ENCODE measurements at regions of chr10 and their contacts with region 1.

Region 1: GRCh38 chr10:17910125-17910789 is 41.5 kb upstream of the SLC39A12 start:
- DNase-seq: peak; percentile 50 to 63
- H3K4me3 ChIP-seq: no peak overlapping the region
- H3K27ac ChIP-seq: no peak overlapping the region
- H3K4me1 ChIP-seq: no peaks in the 10 kb centered on the region
- H3K27me3 ChIP-seq: no peaks in the 10 kb centered on the region
- CTCF ChIP-seq: peak in 4 of 6 experiments; percentile 41 to 61 (median 58)
- POLR2A ChIP-seq: no peak

Region 2: GRCh38 chr10:17836942-17837341 is 73.3 kb before region 1 on chr10:
- intact Hi-C with region 1: no loop called
- DNase-seq: peak; percentile 11 to 34
- H3K4me3 ChIP-seq: no peak overlapping the region
- H3K27ac ChIP-seq: no peak overlapping the region
- H3K4me1 ChIP-seq: no peaks in the 10 kb centered on the region
- H3K27me3 ChIP-seq: no peaks in the 10 kb centered on the region
- CTCF ChIP-seq: no peak
- POLR2A ChIP-seq: no peak

Region 3: DNA sequence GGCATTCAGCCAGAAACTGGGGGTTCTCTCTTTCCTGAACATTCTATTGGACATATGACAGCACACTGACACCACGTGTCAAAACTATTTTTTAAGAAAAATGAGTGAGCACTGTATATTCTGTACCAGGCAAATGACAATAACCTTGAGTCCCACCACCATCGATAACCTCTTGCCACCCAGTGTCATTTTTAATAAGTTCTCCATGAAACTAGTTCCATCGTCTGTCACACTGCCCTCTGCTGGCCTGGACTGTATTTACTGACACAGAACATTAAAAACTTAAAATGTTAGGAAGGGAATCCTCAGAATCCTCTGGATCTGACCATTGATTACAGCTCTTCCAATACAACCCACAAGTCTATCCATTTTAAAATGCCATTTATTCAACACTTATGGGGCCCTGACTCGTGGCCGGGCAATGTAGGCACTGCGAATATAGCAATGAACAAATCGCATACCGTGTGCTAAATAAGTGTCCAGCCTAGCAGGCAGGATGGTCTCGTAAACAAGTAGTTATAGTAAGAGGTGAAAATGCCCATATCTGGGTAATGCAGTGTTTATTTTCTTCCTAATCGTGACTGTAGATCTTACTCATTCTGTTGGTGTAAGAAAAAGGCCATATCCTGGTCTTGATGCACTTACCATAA is 194.1 kb after region 1 on chr10:
- intact Hi-C with region 1: loop called (anchors 10 kb)
- DNase-seq: peak; percentile 64 to 77
- H3K4me3 ChIP-seq: no peak overlapping the region
- H3K27ac ChIP-seq: no peak overlapping the region
- H3K4me1 ChIP-seq: no peaks in the 10 kb centered on the region
- H3K27me3 ChIP-seq: no peaks in the 10 kb centered on the region
- CTCF ChIP-seq: peak; percentile 28 to 68 (median 62)
- POLR2A ChIP-seq: no peak

Region 4: GRCh38 chr10:18214691-18215563 is 304.7 kb after region 1 on chr10:
- intact Hi-C with region 1: loop called (anchors 10 kb)
- DNase-seq: peak; percentile 37 to 55
- H3K4me3 ChIP-seq: no peak overlapping the region
- H3K27ac ChIP-seq: no peak overlapping the region
- H3K4me1 ChIP-seq: no peaks in the 10 kb centered on the region
- H3K27me3 ChIP-seq: no peaks in the 10 kb centered on the region
- CTCF ChIP-seq: peak; percentile 25 to 84 (median 72)
- POLR2A ChIP-seq: no peak